Natural killer cell (primary cell): ENCODE measurements at regions of chr9 and their contacts with region 1.

Region 1: DNA sequence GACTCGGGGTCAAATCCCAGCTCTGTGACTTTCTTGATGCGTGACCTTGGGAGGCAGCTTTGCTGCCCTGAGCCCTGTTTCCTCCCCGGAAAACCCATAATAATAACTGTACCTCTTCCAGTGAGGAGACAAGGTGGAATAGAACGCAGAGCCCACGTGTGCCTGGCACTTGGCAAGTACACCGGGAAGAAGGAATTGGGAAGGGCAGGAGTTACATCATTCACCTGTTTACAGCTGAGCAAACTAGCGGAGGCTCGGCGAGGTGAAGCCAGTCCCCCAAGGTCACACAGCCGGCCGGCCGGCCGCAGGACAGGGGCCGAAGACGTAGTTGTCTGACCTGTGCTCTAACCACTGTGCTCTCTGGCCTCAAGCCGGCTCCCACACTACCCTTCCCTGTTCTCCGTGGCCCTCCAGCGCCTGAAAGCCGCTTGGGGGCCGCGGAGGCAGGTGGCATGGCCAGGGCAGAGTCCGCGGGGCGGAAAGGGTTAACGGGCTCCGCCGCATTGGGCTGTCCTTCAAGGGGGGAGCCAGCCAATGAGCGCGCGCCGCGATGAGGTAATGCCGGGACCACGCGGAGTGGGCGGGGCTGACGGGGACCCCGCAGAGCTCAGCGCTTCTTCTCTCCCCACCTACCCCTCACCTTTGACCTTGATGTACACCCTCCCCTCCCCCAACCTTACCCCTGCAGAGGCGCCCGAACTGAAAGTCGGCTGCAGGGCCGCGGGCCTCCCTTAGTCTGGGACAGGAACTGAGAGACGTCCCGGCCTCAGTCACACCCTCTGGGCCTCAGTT is 125.2 kb downstream of the C9orf50 start:
- DNase-seq: peak; percentile 77 to 88
- ATAC-seq: peak; percentile 82 to 83 (median 82)
- H3K4me3 ChIP-seq: peak overlapping the region; percentile 58
- H3K4me3 Mint-ChIP-seq: peak overlapping the region; percentile 81
- H3K27ac ChIP-seq: peak overlapping the region; percentile 34
- H3K27ac Mint-ChIP-seq: peak overlapping the region; percentile 50 to 88
- H3K4me1 ChIP-seq: peaks cover 35% of the 10 kb centered on the region
- H3K4me1 Mint-ChIP-seq: peaks cover 6 to 33% of the 10 kb centered on the region in 2 donors
- H3K27me3 ChIP-seq: no peaks in the 10 kb centered on the region
- H3K27me3 Mint-ChIP-seq: no peaks in the 10 kb centered on the region
- CTCF ChIP-seq: no peak

Region 2: DNA sequence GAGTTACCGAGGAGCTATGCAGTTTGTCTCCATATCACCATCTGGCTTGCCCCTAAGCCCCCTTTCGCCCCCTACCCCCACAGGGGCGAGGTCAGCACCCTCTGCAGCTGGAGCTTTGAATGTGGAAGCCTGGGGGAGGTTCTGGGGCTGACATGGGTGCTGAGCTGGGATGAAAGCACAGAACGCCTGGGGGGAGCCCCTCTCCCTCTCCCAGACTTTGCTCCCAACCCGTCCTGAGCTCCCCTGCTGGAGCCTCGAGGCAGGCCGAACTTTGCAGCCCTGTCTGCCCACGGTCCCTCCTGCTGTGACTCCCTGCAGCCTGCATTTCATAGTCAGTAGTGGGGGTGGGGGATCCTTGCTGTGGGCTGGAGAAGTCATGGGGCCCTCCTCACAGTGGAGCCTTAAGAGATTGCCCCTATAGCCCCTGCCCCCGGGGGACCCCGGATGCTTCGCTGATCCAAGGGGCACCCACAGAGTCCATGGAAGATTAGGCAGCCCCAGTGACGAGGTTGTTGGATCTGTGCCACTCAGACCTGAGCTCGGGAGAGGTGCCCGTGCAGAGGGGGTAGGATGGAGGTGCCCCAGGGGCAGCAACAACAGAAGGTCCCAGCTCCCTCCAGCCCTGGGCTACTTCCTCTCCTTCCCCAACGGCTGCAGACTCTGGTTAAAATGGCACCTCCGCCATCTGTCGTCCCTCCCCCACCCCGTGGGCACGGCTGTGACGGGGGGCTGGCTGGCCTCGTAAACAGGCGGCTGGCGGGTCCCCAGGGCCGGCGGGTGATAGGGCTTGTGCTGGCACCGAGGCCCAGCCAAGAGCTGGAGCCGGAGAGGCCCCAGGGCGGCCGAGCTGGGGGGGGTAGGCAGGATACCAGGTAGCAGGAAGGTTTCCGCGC is 36.8 kb before region 1 on chr9:
- intact Hi-C with region 1: loop called (anchors 2 kb)
- DNase-seq: peak; percentile 53 to 61
- ATAC-seq: peak; percentile 17 to 28 (median 19)
- H3K4me3 ChIP-seq: no peak overlapping the region
- H3K4me3 Mint-ChIP-seq: peak overlapping the region; percentile 65
- H3K27ac ChIP-seq: peak overlapping the region; percentile 90
- H3K27ac Mint-ChIP-seq: peak overlapping the region; percentile 88 to 96
- H3K4me1 ChIP-seq: peaks cover 61% of the 10 kb centered on the region
- H3K4me1 Mint-ChIP-seq: peaks cover 28 to 60% of the 10 kb centered on the region in 2 donors
- H3K27me3 ChIP-seq: no peaks in the 10 kb centered on the region
- H3K27me3 Mint-ChIP-seq: no peaks in the 10 kb centered on the region
- CTCF ChIP-seq: no peak

Region 3: GRCh38 chr9:129539446-129539845 is 43.7 kb after region 1 on chr9:
- intact Hi-C with region 1: no loop called
- DNase-seq: no peak
- ATAC-seq: no peak
- H3K4me3 ChIP-seq: no peak overlapping the region
- H3K4me3 Mint-ChIP-seq: no peak overlapping the region
- H3K27ac ChIP-seq: no peak overlapping the region
- H3K27ac Mint-ChIP-seq: no peak overlapping the region
- H3K4me1 ChIP-seq: no peaks in the 10 kb centered on the region
- H3K4me1 Mint-ChIP-seq: no peaks in the 10 kb centered on the region
- H3K27me3 ChIP-seq: no peaks in the 10 kb centered on the region
- H3K27me3 Mint-ChIP-seq: peaks cover 8 to 14% of the 10 kb centered on the region in 2 donors
- CTCF ChIP-seq: no peak

Region 4: GRCh38 chr9:129550199-129550839 is 54.6 kb after region 1 on chr9:
- intact Hi-C with region 1: loop called (anchors 10 kb)
- DNase-seq: peak in 1 of 2 donors; percentile 33
- ATAC-seq: peak; percentile 26 to 56 (median 27)
- H3K4me3 ChIP-seq: no peak overlapping the region
- H3K4me3 Mint-ChIP-seq: peak overlapping the region; percentile 70
- H3K27ac ChIP-seq: no peak overlapping the region
- H3K27ac Mint-ChIP-seq: no peak overlapping the region
- H3K4me1 ChIP-seq: peaks cover 10% of the 10 kb centered on the region
- H3K4me1 Mint-ChIP-seq: peaks cover 4 to 11% of the 10 kb centered on the region in 2 donors
- H3K27me3 ChIP-seq: peaks cover 16% of the 10 kb centered on the region
- H3K27me3 Mint-ChIP-seq: peaks cover 39 to 41% of the 10 kb centered on the region in 2 donors
- CTCF ChIP-seq: no peak